Right ventricle myocardium inferior (tissue), 1 donor: ENCODE measurements at regions of chr7 and their contacts with region 1.

Region 1: GRCh38 chr7:100469227-100470044 is 5.4 kb upstream of the SPACDR start:
- DNase-seq: peak; percentile 93
- ATAC-seq: peak; percentile 73

Region 2: GRCh38 chr7:100509231-100509630 is 39.8 kb after region 1 on chr7:
- intact Hi-C with region 1: no loop called
- DNase-seq: no peak
- ATAC-seq: no peak

Region 3: DNA sequence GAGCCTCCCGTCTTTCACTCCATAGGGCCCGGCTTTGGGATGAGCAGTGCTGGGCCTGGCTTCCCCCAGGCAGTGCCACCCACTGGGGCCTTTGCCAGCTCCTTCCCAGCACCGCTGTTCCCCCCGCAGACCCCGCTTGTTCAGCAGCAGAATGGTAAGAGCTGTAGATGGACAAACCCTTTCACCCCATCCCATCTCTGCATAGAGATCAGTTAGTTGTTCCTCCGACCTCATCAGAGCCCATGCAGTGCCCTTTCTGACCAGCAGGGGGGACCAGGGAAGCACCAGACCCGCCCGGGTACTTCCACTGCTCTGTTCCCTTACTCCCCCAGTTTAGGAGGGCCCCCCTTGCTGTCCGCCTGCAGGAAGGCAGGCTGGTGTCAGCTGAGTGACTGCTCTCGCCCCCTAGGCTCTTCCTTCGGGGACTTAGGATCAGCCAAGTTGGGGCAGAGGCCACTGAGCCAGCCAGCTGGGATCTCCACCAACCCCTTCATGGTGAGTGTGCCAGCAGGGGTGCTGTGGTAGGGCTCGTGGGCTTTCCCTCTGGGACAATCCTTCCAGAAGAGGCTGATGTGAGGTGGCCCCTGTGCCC is 94.5 kb after region 1 on chr7:
- intact Hi-C with region 1: loop called (anchors 1 kb)
- DNase-seq: peak; percentile 90
- ATAC-seq: peak; percentile 58

Region 4: DNA sequence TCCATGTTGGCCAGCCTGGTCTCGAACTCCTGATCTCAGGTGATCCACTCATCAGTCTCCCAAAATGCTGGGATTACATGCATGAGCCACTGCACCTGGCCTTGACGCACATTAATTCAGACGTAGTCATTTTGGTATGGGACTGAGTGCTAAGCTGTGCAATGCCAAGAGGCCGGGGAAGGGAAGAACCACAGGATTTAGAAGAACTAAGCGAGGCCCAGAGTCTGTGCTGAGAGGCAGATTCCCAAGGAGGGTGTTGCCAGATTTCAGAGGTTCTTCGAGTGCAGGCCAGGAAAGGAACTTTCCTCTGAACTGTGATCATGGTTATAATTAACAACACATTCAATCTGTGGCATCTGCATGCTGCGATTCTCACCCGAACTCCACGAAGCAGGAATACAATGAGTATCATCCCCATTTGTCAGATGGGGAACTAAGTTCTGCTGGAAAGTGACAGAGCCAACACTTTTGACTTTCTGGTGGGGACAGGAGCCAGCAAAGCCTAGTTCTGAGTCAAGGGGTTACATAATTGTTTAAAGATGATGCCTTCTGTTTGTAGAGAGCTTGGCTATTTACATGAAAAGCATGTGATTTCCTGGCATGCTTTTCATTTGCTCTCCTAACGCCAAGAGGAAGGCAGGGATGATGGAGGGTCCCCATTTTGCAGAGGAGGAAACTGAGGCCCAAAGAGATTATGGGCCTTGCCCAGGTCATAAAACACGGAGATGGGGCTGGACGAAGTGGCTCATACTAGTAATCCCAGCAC is 257.7 kb after region 1 on chr7:
- intact Hi-C with region 1: loop called (anchors 2 kb)
- DNase-seq: no peak
- ATAC-seq: no peak